HEK293 (cell line): ENCODE measurements at regions of chr6 and their contacts with region 1.

Region 1: DNA sequence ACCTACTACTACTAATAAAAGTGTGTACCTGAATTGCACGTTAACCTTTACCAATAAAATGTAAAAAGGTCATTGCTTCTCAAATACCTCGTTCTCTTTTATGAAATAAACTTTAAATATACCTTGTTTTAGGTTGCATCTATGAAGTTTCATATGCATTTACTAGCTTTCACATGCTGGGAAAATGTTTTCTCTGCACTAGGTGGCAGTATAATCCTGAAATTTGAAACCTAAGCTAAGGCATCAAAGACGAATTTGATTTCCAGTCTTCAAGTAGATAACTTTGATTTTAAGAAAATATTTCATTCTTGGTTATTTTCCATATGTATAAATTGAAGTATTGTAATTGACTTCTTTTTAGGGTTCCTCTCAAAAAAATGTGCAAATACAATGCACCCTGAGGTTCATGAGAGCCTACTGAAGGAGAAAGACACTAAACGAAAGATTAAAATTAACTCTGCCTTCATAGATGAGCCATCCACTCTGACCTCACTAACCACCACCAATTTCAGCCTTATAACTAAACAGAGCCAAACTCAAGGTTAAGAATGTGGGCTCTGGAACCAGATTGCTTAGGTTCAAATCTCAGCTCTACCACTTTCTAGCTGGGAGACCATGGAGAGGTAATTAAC is 7.3 kb upstream of the COL9A1 start:
- H3K4me3 ChIP-seq: no peak overlapping the region
- H3K27ac ChIP-seq: no peak overlapping the region
- H3K4me1 ChIP-seq: peaks cover 6% of the 10 kb centered on the region; the same call in 1 of the 2 replicates
- CTCF ChIP-seq: no peak

Region 2: DNA sequence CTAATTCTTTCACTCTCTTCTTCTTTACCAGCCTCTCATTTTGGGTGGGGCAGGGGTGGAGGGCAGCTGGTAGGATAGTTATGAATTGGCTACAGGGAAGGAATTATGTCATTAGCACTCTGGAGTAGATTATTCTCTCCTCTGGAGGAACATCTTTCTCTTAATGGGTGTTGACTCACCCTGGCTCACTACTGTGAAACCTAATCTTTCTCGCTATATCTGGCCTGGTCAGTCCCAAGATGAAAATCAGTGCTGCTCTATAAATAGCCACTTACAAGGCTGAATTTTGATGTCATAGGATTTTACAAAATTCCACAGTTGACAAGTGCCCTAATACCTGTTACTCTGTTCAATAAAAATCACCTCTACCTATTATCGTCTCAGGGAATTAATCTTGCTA is 158.6 kb before region 1 on chr6:
- CTCF ChIA-PET with region 1: no interaction called
- POLR2A ChIA-PET with region 1: no interaction called
- H3K4me3 ChIP-seq: no peak overlapping the region
- H3K27ac ChIP-seq: no peak overlapping the region
- H3K4me1 ChIP-seq: peaks cover 18% of the 10 kb centered on the region; the same call in 1 of the 2 replicates
- CTCF ChIP-seq: no peak

Region 3: GRCh38 chr6:70196531-70196930 is 113.6 kb before region 1 on chr6:
- CTCF ChIA-PET with region 1: no interaction called
- POLR2A ChIA-PET with region 1: no interaction called
- H3K4me3 ChIP-seq: no peak overlapping the region
- H3K27ac ChIP-seq: no peak overlapping the region
- H3K4me1 ChIP-seq: no peaks in the 10 kb centered on the region
- CTCF ChIP-seq: no peak

Region 4: GRCh38 chr6:70241991-70242420 is 68.2 kb before region 1 on chr6:
- CTCF ChIA-PET with region 1: interaction called, 16 read pairs
- POLR2A ChIA-PET with region 1: no interaction called
- H3K4me3 ChIP-seq: no peak overlapping the region
- H3K27ac ChIP-seq: no peak overlapping the region
- H3K4me1 ChIP-seq: no peaks in the 10 kb centered on the region
- CTCF ChIP-seq: no peak

Region 5: DNA sequence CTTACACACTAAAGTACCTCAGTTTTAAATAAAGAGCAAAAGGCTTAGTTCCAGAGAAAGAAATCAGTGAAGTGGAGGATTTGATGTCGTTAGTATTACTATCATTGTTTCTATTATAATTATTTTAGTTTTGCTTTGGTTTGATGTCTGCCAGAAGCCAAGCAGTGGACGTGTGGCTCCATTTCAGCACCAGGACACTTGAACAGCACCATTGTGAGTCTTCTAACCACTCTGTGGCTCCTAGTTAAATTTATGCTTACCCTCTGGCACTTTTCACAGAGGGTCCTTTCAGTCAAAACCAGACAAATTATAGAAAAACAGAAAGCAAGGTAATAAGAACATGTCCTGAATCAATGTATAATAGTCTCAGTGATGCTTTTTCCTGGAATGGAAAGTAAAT is 10.7 kb before region 1 on chr6:
- CTCF ChIA-PET with region 1: interaction called, 45 read pairs
- POLR2A ChIA-PET with region 1: no interaction called
- H3K4me3 ChIP-seq: no peak overlapping the region
- H3K27ac ChIP-seq: no peak overlapping the region
- H3K4me1 ChIP-seq: no peaks in the 10 kb centered on the region
- CTCF ChIP-seq: no peak

Region 6: DNA sequence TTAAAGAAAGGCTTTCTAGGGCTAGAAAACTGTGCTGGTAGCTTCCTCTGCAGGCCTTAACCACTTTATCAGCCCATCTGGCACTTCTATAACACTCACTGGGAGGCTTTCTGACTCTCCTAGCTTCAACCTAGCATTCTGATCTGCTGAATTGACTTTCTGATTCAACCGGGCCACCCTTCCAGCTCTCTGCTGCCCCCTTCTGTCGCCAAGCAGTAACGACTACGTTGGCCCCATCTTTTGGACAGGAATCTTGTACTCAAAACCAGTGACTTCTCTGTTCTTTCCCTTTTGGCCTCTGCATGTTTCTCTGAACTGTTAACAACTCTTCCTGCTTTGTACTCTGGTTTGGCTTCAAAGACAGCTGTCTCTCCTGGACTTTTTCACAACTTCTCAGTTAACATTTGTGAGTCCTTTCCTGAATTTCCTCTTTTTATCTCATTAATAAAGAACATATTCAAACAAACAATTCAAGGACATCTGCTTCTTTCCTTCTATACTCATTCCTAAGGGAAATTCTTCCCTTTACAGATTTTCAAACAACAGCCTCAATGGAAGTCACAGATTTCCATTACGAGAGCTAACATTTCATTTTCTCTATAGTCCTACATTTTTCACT is 59.3 kb after region 1 on chr6:
- CTCF ChIA-PET with region 1: interaction called, 368 read pairs
- POLR2A ChIA-PET with region 1: interaction called, 4 read pairs
- H3K4me3 ChIP-seq: no peak overlapping the region
- H3K27ac ChIP-seq: no peak overlapping the region
- H3K4me1 ChIP-seq: no peaks in the 10 kb centered on the region
- CTCF ChIP-seq: peak; percentile 78

Region 7: DNA sequence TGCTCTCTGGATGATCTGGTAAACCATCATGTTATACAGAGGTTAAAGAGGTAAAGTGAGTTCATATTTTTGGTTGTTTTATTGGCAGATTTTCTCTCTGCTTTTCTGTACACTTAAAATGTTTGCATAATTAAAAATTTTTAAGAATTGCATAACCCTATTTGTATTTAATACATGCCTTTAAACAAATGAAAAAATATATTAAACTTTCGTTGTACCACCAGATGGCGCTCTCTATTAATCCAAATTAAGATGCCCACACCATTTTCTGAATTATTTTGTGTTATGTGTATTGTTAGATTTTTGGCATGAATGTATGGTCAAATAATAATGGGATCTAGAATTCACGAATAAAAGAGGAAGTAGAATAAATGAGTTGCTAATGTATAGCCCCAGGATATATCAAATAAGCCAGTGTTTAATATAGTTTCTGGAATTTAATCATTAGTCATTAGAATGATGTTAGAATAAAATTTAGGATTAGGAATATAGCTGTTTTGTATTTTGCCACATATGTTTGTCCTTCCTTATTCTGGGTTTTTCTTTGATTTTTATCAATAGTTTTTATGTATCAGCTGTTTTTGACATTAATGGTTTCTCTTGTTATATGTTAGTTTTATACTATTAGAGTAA is 396.4 kb after region 1 on chr6:
- CTCF ChIA-PET with region 1: interaction called, 12 read pairs
- POLR2A ChIA-PET with region 1: no interaction called
- H3K4me3 ChIP-seq: no peak overlapping the region
- H3K27ac ChIP-seq: no peak overlapping the region
- H3K4me1 ChIP-seq: no peaks in the 10 kb centered on the region
- CTCF ChIP-seq: 0 out of 2 replicates have a peak, but pooled peaks have one; percentile 11

Region 8: DNA sequence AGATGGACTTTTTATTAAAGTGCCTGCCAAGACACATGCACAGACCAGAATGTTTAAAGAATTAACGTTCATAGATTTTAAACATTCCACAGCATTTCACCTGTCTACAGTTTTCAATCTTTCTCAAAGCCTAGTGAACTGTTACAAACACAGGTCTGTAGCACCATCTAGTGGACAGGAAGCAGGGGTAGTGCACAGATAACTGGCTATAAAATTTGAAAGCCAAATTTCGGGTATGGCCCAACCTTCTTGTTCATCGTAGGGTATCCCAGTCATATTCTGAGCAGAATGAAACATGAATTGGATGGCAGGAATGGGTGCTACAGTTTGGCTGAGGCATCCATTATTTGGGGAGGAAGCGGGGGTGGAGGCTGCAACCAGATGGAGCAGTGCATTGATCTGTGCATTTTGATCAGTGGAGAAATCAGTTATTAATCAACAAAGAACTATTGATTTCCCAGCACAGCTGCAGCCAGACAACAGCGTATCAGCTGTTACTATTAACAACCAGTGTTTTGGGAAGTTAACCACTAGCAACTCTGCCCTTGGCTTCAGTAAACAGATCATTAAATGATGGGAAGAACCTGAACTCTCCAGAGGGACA is 702.8 kb after region 1 on chr6:
- CTCF ChIA-PET with region 1: interaction called, 49 read pairs
- POLR2A ChIA-PET with region 1: no interaction called
- H3K4me3 ChIP-seq: no peak overlapping the region
- H3K27ac ChIP-seq: no peak overlapping the region
- H3K4me1 ChIP-seq: no peaks in the 10 kb centered on the region
- CTCF ChIP-seq: peak; percentile 42; the same call in 1 of the 2 replicates